ENCODE measurements at regions of chr10 and their contacts with region 1.

Region 1: DNA sequence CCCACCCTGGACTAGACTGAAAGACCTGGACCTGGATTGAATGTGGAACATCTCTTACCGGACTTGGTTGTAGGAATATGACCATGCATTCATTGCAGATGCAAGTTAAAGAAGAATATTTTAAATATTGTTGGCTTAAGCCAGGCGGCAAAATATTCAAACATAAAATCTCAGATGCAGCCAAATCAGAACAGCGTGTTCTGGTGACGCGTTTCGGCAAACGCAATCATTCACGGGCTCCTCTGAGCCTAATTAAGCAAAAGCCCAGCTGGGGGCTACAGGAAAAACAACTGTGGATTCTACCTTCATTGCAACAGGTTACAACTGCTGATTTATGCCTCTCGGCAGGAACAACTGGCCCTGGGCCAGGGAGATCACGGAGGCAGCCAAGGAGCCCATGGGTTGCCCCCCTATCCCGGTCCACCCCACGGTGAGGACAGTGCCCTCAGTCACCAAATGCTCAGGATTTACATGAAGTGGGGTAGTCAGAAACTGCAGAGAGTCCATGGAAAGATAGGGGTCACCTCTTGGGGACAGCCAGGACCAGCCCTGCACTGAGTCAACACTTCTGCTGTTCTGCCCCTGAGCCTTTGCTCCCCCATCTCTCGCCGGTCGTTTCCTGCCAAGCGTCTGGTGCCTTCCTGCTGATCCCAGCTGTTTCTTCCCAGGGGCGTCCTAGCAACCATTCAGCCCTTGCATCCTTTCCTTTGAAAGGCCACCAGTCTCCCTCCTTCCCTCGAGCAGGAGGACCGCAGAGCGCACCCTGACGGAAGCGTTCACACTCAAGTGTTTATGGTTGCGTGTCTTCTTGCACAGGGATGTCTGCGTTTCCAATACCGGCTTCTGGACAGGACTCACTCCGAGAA is 64.4 kb upstream of the SFMBT2 start:
- DNase-seq: no peak
- ATAC-seq: no peak
- H3K4me3 ChIP-seq: no peak overlapping the region
- H3K27ac ChIP-seq: no peak overlapping the region
- H3K4me1 ChIP-seq: no peaks in the 10 kb centered on the region
- H3K27me3 ChIP-seq: peaks cover 22% of the 10 kb centered on the region; the same call in 1 of the 2 replicates
- CTCF ChIP-seq: no peak

Region 2: DNA sequence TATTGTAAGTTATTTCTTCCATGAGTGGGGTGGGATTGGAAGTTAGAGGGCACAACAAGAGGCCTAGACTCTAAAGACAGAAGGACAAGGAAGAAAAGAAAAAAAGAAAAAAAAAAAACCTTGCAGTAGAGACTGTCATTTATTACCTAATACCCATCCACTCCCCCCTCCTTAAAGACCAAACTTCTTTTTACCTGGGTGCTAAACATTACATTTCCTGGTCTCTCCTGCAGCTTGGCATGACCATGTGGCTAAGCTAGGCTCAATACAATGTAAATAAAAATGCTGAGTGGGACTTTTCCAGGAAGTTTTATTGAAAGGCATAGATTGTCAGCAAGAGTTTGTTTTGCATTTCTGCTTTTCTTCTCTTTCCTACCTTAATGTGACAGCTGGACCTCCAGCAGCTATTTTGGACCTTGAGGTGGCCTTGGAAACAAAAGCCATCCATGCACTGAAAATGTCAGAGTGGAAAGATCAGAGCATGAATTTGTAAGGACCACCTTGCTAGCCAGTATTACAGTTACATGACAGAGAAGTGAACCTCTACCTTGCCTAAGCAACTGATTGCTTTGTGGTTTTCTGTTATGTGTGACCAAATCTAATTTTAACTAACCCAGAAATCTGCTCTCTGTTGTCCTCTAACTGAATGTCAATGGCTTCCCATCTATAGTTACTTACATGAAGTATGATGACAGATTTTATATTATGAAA is 16.8 kb after region 1 on chr10:
- CTCF ChIA-PET with region 1: no interaction called
- POLR2A ChIA-PET with region 1: interaction called, 10 read pairs
- intact Hi-C with region 1: no loop called
- DNase-seq: no peak
- ATAC-seq: no peak
- H3K4me3 ChIP-seq: no peak overlapping the region
- H3K27ac ChIP-seq: no peak overlapping the region
- H3K4me1 ChIP-seq: no peaks in the 10 kb centered on the region
- H3K27me3 ChIP-seq: peaks cover 19% of the 10 kb centered on the region
- CTCF ChIP-seq: no peak